ENCODE measurements at regions of chr20 and their contacts with region 1.

Region 1: GRCh38 chr20:63955827-63956663 is at the start of gene UCKL1:
- DNase-seq: peak; percentile 82 to 95 (median 93)
- ATAC-seq: peak; percentile 91
- H3K4me3 ChIP-seq: peak within 1 kb of the TSS; percentile 87
- H3K4me3 Mint-ChIP-seq: peak within 1 kb of the TSS; percentile 79 to 87 (median 86)
- H3K27ac ChIP-seq: peak within 1 kb of the TSS; percentile 93
- H3K27ac Mint-ChIP-seq: peak within 1 kb of the TSS; percentile 32 to 89 (median 80)
- H3K4me1 ChIP-seq: peaks cover 18 to 26% of the 10 kb centered on the region in 2 donors
- H3K4me1 Mint-ChIP-seq: peaks cover 19 to 37% (median 27%) of the 10 kb centered on the region in 7 donors
- H3K27me3 ChIP-seq: no peaks in the 10 kb centered on the region
- H3K27me3 Mint-ChIP-seq: no peaks in the 10 kb centered on the region
- total RNA-seq, gene UCKL1: 42.0 to 49.0 (median 46.6) TPM

Region 2: GRCh38 chr20:63452821-63453523 is 503.1 kb before region 1 on chr20:
- CTCF ChIA-PET with region 1: no interaction called
- POLR2A ChIA-PET with region 1: no interaction called
- intact Hi-C with region 1: no loop called
- DNase-seq: no peak
- ATAC-seq: peak; percentile 21
- H3K4me3 ChIP-seq: no peak overlapping the region
- H3K4me3 Mint-ChIP-seq: peak overlapping the region in 1 of 10 donors; percentile 35
- H3K27ac ChIP-seq: no peak overlapping the region
- H3K27ac Mint-ChIP-seq: no peak overlapping the region
- H3K4me1 ChIP-seq: no peaks in the 10 kb centered on the region
- H3K4me1 Mint-ChIP-seq: peaks cover 0 to 5% (median 0%) of the 10 kb centered on the region in 7 donors
- H3K27me3 ChIP-seq: no peaks in the 10 kb centered on the region
- H3K27me3 Mint-ChIP-seq: peaks cover 6 to 35% (median 13%) of the 10 kb centered on the region in 5 donors

Region 3: GRCh38 chr20:63627129-63627750 is 328.8 kb before region 1 on chr20:
- CTCF ChIA-PET with region 1: no interaction called
- POLR2A ChIA-PET with region 1: no interaction called
- intact Hi-C with region 1: loop called (anchors 1 to 5 kb)
- DNase-seq: peak; percentile 74 to 99 (median 97)
- ATAC-seq: peak; percentile 93
- H3K4me3 ChIP-seq: peak overlapping the region; percentile 96
- H3K4me3 Mint-ChIP-seq: peak overlapping the region; percentile 93 to 99 (median 98)
- H3K27ac ChIP-seq: peak overlapping the region; percentile 85
- H3K27ac Mint-ChIP-seq: peak overlapping the region; percentile 79 to 98 (median 95)
- H3K4me1 ChIP-seq: peaks cover 29 to 40% of the 10 kb centered on the region in 2 donors
- H3K4me1 Mint-ChIP-seq: peaks cover 28 to 64% (median 42%) of the 10 kb centered on the region in 7 donors
- H3K27me3 ChIP-seq: no peaks in the 10 kb centered on the region
- H3K27me3 Mint-ChIP-seq: no peaks in the 10 kb centered on the region

Region 4: DNA sequence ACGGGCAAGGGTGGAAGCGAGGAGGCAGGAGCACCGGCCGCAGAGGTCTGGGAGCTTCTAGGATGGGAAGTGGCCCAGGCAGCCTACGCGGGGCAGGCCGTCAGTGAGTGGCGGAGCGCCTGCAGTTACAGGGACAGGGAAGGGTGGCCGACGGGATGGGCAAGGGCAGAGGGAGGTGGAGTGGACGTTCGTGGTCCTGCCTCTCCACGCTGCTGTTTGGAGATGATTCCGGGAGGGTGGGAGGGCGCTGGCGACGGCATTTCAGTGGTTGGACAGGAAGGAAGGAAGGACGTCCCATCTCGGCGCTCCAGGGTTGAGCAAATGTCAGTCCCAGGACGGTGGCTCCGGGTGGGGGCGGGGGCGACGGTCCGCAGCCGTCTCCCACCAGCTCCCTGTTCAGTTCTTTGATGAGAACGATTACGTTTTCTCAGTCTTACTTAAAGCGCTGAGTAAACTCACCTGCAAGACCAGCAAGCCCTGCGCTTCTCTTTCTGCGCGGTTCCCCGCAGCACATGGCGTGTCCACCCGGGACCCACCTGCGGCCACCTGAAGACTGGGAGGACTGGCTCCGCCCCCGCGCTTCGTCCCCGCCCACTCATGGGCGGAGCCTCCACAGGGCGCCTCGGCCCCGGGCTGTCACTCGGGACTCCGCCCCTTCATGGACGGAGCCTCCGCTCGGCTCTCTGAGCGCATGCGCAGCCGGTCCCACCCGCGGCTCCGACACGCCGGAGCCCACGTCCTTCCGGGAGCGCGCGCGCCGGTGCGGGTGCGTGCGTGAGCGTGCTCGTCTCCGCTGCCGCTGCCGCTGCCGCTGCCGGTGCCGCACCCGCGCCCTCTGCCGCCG is 61.5 kb before region 1 on chr20 and contains the start of gene DNAJC5:
- CTCF ChIA-PET with region 1: no interaction called
- POLR2A ChIA-PET with region 1: interaction called, 3 read pairs
- intact Hi-C with region 1: loop called (anchors 1 kb)
- DNase-seq: peak; percentile 96 to 99 (median 98)
- ATAC-seq: peak; percentile 95
- H3K4me3 ChIP-seq: peak within 1 kb of the TSS; percentile 56
- H3K4me3 Mint-ChIP-seq: peak within 1 kb of the TSS; percentile 86 to 99 (median 96)
- H3K27ac ChIP-seq: peak within 1 kb of the TSS; percentile 94
- H3K27ac Mint-ChIP-seq: peak within 1 kb of the TSS; percentile 94 to 98 (median 97)
- H3K4me1 ChIP-seq: peaks cover 21% of the 10 kb centered on the region in 2 donors
- H3K4me1 Mint-ChIP-seq: peaks cover 34 to 49% (median 43%) of the 10 kb centered on the region in 7 donors
- H3K27me3 ChIP-seq: no peaks in the 10 kb centered on the region
- H3K27me3 Mint-ChIP-seq: peaks cover 0 to 2% (median 0%) of the 10 kb centered on the region in 5 donors
- total RNA-seq, gene DNAJC5: 35.5 to 56.8 (median 50.3) TPM

Region 5: GRCh38 chr20:63980806-63981728 is 25.0 kb after region 1 on chr20 and contains the start of gene PRPF6:
- CTCF ChIA-PET with region 1: interaction called, 3 read pairs
- POLR2A ChIA-PET with region 1: interaction called, 13 read pairs
- intact Hi-C with region 1: loop called (anchors 1 kb)
- DNase-seq: peak; percentile 89 to 95 (median 92)
- ATAC-seq: peak; percentile 85
- H3K4me3 ChIP-seq: peak within 1 kb of the TSS; percentile 78
- H3K4me3 Mint-ChIP-seq: peak within 1 kb of the TSS; percentile 88 to 97 (median 95)
- H3K27ac ChIP-seq: peak within 1 kb of the TSS; percentile 95
- H3K27ac Mint-ChIP-seq: peak within 1 kb of the TSS; percentile 87 to 99 (median 96)
- H3K4me1 ChIP-seq: peaks cover 34 to 47% of the 10 kb centered on the region in 2 donors
- H3K4me1 Mint-ChIP-seq: peaks cover 53 to 77% (median 65%) of the 10 kb centered on the region in 7 donors
- H3K27me3 ChIP-seq: no peaks in the 10 kb centered on the region
- H3K27me3 Mint-ChIP-seq: no peaks in the 10 kb centered on the region
- total RNA-seq, gene PRPF6: 71.2 to 95.8 (median 82.9) TPM

Region 6: GRCh38 chr20:64079273-64080012 is 123.4 kb after region 1 on chr20 and contains the start of gene RGS19:
- CTCF ChIA-PET with region 1: no interaction called
- POLR2A ChIA-PET with region 1: interaction called, 3 read pairs
- intact Hi-C with region 1: loop called in 1 of 2 experiments (anchors 1 kb)
- DNase-seq: peak; percentile 59 to 86 (median 65)
- ATAC-seq: peak; percentile 63
- H3K4me3 ChIP-seq: peak within 1 kb of the TSS; percentile 89
- H3K4me3 Mint-ChIP-seq: peak within 1 kb of the TSS; percentile 81 to 98 (median 92)
- H3K27ac ChIP-seq: peak within 1 kb of the TSS; percentile 79
- H3K27ac Mint-ChIP-seq: peak within 1 kb of the TSS; percentile 78 to 94 (median 85)
- H3K4me1 ChIP-seq: peaks cover 22 to 34% of the 10 kb centered on the region in 2 donors
- H3K4me1 Mint-ChIP-seq: peaks cover 21 to 53% (median 39%) of the 10 kb centered on the region in 7 donors
- H3K27me3 ChIP-seq: no peaks in the 10 kb centered on the region
- H3K27me3 Mint-ChIP-seq: peaks cover 0 to 18% (median 0%) of the 10 kb centered on the region in 5 donors
- total RNA-seq, gene RGS19: 21.8 to 93.4 (median 23.6) TPM

Measured in naive thymus-derived CD4-positive, alpha-beta T cell (primary cell).